ENCODE measurements at regions of chr9 and their contacts with region 1.

Region 1: DNA sequence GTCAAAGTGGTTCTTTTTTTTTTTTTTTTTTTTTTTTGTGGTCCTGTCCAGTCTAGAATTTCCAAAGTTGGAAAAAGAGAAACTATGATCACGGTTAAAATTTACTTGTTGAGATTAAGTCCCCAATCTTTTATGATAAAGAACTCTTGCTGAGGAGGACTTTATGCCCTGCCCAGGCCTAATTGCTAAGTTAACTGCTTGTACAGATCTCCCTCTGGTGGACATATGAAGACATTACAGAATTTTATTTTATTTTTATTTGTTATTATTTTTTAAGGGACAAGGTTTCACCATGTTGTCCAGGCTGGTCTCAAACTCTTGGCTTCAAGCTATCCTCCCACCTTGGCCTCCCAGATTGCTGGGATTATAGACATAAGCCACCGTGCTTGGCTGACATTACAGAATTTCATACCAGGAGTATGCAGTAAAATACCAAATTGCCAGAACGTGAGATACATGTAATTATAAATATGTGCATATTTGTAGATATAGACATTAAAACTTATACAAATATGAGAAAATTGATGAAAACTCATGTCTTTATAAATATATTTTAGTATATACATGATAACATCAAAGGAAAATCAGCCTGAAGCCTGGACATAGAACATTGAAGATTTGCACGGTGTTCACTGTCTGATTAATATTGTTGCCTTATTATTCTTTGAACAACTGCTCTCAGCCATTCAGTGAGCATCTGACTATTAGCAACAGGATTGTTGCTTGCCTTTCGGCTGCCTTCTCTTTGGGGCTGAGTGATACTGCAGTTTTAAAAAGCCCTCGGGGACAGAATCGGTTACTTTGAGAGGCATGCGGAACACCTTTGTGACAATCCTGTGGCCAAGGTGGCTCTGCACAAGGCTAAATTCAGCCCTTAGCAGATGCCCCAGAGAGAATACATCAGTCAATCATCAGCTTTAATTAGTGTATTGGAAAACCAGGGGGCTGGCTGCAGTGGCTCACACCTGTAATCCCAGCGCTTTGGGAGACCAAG is 91.0 kb downstream of the RFK start:
- DNase-seq: peak in 6 of 9 donors; percentile 28 to 60 (median 54)
- ATAC-seq: peak; percentile 75
- H3K4me3 ChIP-seq: no peak overlapping the region
- H3K4me3 Mint-ChIP-seq: no peak overlapping the region
- H3K27ac ChIP-seq: no peak overlapping the region
- H3K27ac Mint-ChIP-seq: no peak overlapping the region
- H3K4me1 ChIP-seq: no peaks in the 10 kb centered on the region
- H3K4me1 Mint-ChIP-seq: peaks cover 0 to 3% (median 0%) of the 10 kb centered on the region in 7 donors
- H3K27me3 ChIP-seq: no peaks in the 10 kb centered on the region
- H3K27me3 Mint-ChIP-seq: peaks cover 0 to 17% (median 7%) of the 10 kb centered on the region in 5 donors

Region 2: GRCh38 chr9:75487856-75488718 is 815.2 kb before region 1 on chr9:
- CTCF ChIA-PET with region 1: no interaction called
- POLR2A ChIA-PET with region 1: no interaction called
- intact Hi-C with region 1: loop called in 1 of 2 experiments (anchors 2 kb)
- DNase-seq: no peak
- ATAC-seq: no peak
- H3K4me3 ChIP-seq: no peak overlapping the region
- H3K4me3 Mint-ChIP-seq: no peak overlapping the region
- H3K27ac ChIP-seq: no peak overlapping the region
- H3K27ac Mint-ChIP-seq: no peak overlapping the region
- H3K4me1 ChIP-seq: no peaks in the 10 kb centered on the region
- H3K4me1 Mint-ChIP-seq: no peaks in the 10 kb centered on the region
- H3K27me3 ChIP-seq: no peaks in the 10 kb centered on the region
- H3K27me3 Mint-ChIP-seq: peaks cover 0 to 38% (median 5%) of the 10 kb centered on the region in 5 donors

Region 3: DNA sequence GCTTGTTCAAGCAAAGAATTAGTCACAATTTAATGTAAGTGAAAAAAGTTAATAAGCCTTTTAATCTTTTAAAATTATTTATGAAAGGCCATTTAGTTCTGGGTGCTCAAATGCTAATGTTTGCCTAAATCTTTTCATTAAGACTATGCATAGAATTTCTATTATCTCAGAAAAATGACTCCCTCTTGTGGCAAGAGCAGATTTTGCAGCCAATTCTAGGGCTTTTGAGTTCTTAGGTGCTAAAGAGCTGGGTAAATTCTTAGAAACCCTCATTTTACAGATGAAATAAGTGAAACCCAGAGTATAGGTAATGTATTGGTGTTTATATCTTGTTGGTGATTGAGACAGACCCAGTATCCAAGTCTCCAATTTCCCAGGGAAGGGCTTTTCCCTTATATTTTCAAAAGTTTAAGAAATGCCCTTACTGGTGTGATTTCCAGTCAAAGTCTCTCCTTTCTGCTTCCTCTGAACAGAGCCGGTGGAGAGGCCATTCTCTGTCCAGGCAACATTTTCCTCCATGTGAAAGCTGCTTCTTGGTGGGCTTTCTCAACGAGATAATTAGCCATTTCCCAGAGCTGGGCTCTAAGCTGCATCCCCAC is 436.9 kb before region 1 on chr9:
- CTCF ChIA-PET with region 1: interaction called, 5 read pairs
- POLR2A ChIA-PET with region 1: no interaction called
- intact Hi-C with region 1: loop called (anchors 2 kb)
- DNase-seq: peak in 6 of 9 donors; percentile 18 to 61 (median 52)
- ATAC-seq: peak; percentile 61
- H3K4me3 ChIP-seq: no peak overlapping the region
- H3K4me3 Mint-ChIP-seq: no peak overlapping the region
- H3K27ac ChIP-seq: no peak overlapping the region
- H3K27ac Mint-ChIP-seq: no peak overlapping the region
- H3K4me1 ChIP-seq: peaks cover 0 to 18% of the 10 kb centered on the region in 2 donors
- H3K4me1 Mint-ChIP-seq: peaks cover 0 to 33% (median 23%) of the 10 kb centered on the region in 7 donors
- H3K27me3 ChIP-seq: no peaks in the 10 kb centered on the region
- H3K27me3 Mint-ChIP-seq: peaks cover 0 to 4% (median 0%) of the 10 kb centered on the region in 5 donors

Region 4: DNA sequence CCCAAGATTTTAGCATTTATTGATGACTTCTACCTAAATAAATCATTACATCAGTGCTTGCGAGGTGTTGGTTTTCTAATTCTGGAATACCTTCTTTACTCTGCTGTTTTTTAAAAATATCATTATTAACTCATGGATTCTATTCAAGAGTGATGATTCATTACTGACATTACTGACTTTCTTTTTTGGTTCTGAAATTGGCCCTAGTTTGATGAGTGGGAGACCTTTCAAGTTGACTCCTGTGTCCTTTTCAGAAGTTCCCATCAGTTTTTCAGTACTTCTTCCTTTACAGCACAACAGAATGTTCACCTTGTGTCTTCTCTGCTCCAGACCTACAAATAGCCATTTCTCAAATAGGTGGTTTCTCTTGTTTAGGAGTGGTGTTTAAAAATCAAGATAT is 298.7 kb before region 1 on chr9:
- CTCF ChIA-PET with region 1: interaction called, 3 read pairs
- POLR2A ChIA-PET with region 1: no interaction called
- intact Hi-C with region 1: loop called (anchors 2 kb)
- DNase-seq: no peak
- ATAC-seq: no peak
- H3K4me3 ChIP-seq: no peak overlapping the region
- H3K4me3 Mint-ChIP-seq: peak overlapping the region in 4 of 10 donors; percentile 29 to 62 (median 38)
- H3K27ac ChIP-seq: no peak overlapping the region
- H3K27ac Mint-ChIP-seq: peak overlapping the region in 4 of 9 donors; percentile 15 to 54 (median 22)
- H3K4me1 ChIP-seq: peaks cover 0 to 25% of the 10 kb centered on the region in 2 donors
- H3K4me1 Mint-ChIP-seq: peaks cover 20 to 94% (median 80%) of the 10 kb centered on the region in 7 donors
- H3K27me3 ChIP-seq: no peaks in the 10 kb centered on the region
- H3K27me3 Mint-ChIP-seq: no peaks in the 10 kb centered on the region

Region 5: GRCh38 chr9:76269818-76270217 is 33.4 kb before region 1 on chr9:
- CTCF ChIA-PET with region 1: no interaction called
- POLR2A ChIA-PET with region 1: no interaction called
- intact Hi-C with region 1: no loop called
- DNase-seq: no peak
- ATAC-seq: no peak
- H3K4me3 ChIP-seq: no peak overlapping the region
- H3K4me3 Mint-ChIP-seq: no peak overlapping the region
- H3K27ac ChIP-seq: no peak overlapping the region
- H3K27ac Mint-ChIP-seq: no peak overlapping the region
- H3K4me1 ChIP-seq: no peaks in the 10 kb centered on the region
- H3K4me1 Mint-ChIP-seq: no peaks in the 10 kb centered on the region
- H3K27me3 ChIP-seq: no peaks in the 10 kb centered on the region
- H3K27me3 Mint-ChIP-seq: peaks cover 0 to 5% (median 0%) of the 10 kb centered on the region in 5 donors

Region 6: DNA sequence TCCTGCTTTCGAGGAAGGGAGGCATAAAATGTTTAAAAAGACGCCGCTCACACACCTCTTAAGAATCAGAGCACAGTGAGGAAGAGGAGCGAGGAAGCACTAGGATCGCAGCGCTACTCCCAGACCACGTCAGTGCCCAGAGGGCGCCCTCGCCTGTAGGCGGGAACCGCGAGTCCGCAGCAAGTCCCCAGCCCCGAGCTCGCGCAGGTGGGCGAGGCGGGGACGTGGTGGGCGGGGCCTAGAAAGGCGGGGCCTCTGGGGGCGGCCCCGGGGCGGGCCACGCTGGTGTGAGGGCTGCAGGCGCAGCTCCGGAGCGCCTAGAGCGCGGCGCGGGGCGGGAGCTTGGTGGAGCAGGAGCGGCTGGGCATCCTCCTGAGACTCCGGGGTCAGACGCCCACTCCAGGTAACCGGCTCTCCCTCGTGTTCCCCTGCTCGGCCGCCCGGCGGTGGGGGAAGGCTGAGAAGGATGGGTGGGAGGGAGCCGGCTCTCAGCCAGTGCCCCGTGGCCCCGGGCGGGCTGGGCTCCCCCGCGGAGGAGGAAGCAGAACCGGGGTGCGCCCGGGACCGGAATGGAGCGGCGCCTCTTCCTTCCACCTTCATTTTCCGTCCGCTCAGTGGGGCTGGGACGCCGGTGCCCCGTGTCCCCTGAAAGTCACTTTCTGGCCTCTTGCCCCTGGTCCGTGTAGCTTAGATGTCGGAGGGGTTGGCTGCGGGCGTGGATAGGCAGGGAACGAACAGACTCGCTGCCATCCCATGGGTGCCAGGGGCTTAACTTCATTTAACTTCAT is 155.9 kb after region 1 on chr9 and contains the start of gene GCNT1:
- CTCF ChIA-PET with region 1: no interaction called
- POLR2A ChIA-PET with region 1: no interaction called
- intact Hi-C with region 1: no loop called
- DNase-seq: peak; percentile 78 to 98 (median 86)
- ATAC-seq: peak; percentile 98
- H3K4me3 ChIP-seq: peak within 1 kb of the TSS; percentile 92
- H3K4me3 Mint-ChIP-seq: peak within 1 kb of the TSS; percentile 81 to 96 (median 92)
- H3K27ac ChIP-seq: no peak within 1 kb of the TSS
- H3K27ac Mint-ChIP-seq: peak within 1 kb of the TSS in 8 of 9 donors; percentile 7 to 81 (median 61)
- H3K4me1 ChIP-seq: peaks cover 3 to 11% of the 10 kb centered on the region in 2 donors
- H3K4me1 Mint-ChIP-seq: peaks cover 16 to 34% (median 20%) of the 10 kb centered on the region in 7 donors
- H3K27me3 ChIP-seq: no peaks in the 10 kb centered on the region
- H3K27me3 Mint-ChIP-seq: peaks cover 0 to 3% (median 0%) of the 10 kb centered on the region in 5 donors
- total RNA-seq, gene GCNT1: 1.4 to 8.9 (median 1.7) TPM